Ascending aorta (tissue), 2 donors: ENCODE measurements at regions of chr6 and their contacts with region 1.

Region 1: GRCh38 chr6:3841711-3842565 is 7.2 kb upstream of the FAM50B start:
- DNase-seq: peak in 1 of 2 donors; percentile 79
- H3K4me3 ChIP-seq: no peak overlapping the region
- H3K27ac ChIP-seq: peak overlapping the region; percentile 85 to 91
- H3K4me1 ChIP-seq: peaks cover 7 to 40% of the 10 kb centered on the region in 2 donors
- H3K27me3 ChIP-seq: no peaks in the 10 kb centered on the region
- CTCF ChIP-seq: no peak

Region 2: DNA sequence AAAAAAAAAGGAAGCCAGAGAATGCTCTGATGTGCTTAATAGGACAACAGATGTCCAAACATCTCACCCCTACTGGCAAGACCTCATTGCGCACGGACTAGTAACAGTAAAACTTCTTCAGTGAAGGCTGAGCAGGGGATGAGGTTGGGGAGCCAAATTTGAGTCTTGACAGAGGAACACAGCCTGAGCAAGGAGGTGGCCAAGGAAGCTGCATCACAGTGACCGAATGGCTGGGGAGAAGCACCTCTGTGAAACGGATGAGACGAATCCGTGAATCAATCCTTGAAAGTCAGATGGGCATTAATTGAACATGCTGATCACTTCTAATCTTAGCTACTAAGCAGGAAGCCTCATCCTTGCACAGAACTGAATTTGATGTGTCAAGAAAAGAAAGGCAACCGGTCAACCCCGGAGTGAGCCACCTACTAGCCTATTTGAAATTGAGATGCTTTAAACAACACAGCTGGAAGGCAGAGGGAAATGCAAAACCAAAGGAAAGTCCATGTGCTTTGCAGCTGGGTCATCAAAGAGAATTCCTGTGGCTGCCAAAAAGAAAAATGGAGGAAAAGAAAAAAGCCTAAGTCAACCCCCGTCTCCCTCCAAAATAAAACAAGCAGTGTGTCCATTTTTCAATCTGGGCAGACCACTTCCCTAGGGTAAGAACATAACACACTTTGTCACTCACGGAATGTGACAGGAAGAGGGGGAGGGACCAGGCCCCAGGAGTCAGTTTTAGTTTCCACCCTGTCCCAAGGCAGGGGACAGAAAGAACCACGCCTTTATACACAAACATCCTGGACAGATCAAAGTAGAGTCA is 119.9 kb before region 1 on chr6:
- intact Hi-C with region 1: no loop called
- DNase-seq: no peak
- H3K4me3 ChIP-seq: no peak overlapping the region
- H3K27ac ChIP-seq: peak overlapping the region; percentile 63 to 72
- H3K4me1 ChIP-seq: peaks cover 20 to 46% of the 10 kb centered on the region in 2 donors
- H3K27me3 ChIP-seq: no peaks in the 10 kb centered on the region
- CTCF ChIP-seq: no peak

Region 3: GRCh38 chr6:3808759-3809514 is 33.0 kb before region 1 on chr6:
- intact Hi-C with region 1: loop called (anchors 2 kb)
- DNase-seq: peak; percentile 54 to 93
- H3K4me3 ChIP-seq: peak overlapping the region in 1 of 2 donors; percentile 3
- H3K27ac ChIP-seq: peak overlapping the region; percentile 86 to 94
- H3K4me1 ChIP-seq: peaks cover 13 to 47% of the 10 kb centered on the region in 2 donors
- H3K27me3 ChIP-seq: no peaks in the 10 kb centered on the region
- CTCF ChIP-seq: no peak

Region 4: GRCh38 chr6:3977875-3978711 is 136.2 kb after region 1 on chr6:
- intact Hi-C with region 1: no loop called
- DNase-seq: peak in 1 of 2 donors; percentile 68
- H3K4me3 ChIP-seq: no peak overlapping the region
- H3K27ac ChIP-seq: no peak overlapping the region
- H3K4me1 ChIP-seq: no peaks in the 10 kb centered on the region
- H3K27me3 ChIP-seq: no peaks in the 10 kb centered on the region
- CTCF ChIP-seq: peak; percentile 48 to 61 (median 58)